Activated B cell treated with CpG ODN at 0.5 μM for 24 hours (primary cell): ENCODE measurements at regions of chr22 and their contacts with region 1.

Region 1: GRCh38 chr22:40323681-40324171 is 22.6 kb upstream of the ADSL start:
- DNase-seq: no peak
- ATAC-seq: no peak
- H3K4me3 Mint-ChIP-seq: no peak overlapping the region
- H3K27ac Mint-ChIP-seq: no peak overlapping the region
- H3K4me1 Mint-ChIP-seq: peaks cover 10% of the 10 kb centered on the region
- H3K27me3 Mint-ChIP-seq: no peaks in the 10 kb centered on the region
- CTCF ChIP-seq: no peak

Region 2: DNA sequence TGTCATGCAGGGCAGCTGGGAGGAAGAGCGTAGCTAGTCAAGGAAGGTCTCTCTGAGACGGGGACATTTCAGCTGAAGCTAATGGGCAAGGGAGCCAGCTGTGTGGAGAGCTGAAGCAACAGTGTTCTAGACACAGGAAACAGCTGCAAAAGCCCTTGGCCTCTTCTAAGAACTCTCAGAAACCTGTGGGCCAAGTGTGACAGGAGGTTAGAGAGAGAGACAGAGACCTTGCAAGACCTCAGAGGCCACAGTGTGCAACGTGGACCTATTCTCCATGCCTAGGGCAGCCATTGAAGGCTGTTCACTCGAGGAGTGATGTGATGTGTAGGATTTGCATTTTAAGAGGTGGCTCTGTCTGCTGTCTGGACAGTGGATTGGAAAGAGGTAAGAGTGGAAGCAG is 194.7 kb before region 1 on chr22:
- CTCF ChIA-PET with region 1: no interaction called
- POLR2A ChIA-PET with region 1: no interaction called
- intact Hi-C with region 1: no loop called
- DNase-seq: no peak
- ATAC-seq: peak; percentile 25
- H3K4me3 Mint-ChIP-seq: no peak overlapping the region
- H3K27ac Mint-ChIP-seq: peak overlapping the region; percentile 5
- H3K4me1 Mint-ChIP-seq: peaks cover 4% of the 10 kb centered on the region
- H3K27me3 Mint-ChIP-seq: no peaks in the 10 kb centered on the region
- CTCF ChIP-seq: no peak

Region 3: DNA sequence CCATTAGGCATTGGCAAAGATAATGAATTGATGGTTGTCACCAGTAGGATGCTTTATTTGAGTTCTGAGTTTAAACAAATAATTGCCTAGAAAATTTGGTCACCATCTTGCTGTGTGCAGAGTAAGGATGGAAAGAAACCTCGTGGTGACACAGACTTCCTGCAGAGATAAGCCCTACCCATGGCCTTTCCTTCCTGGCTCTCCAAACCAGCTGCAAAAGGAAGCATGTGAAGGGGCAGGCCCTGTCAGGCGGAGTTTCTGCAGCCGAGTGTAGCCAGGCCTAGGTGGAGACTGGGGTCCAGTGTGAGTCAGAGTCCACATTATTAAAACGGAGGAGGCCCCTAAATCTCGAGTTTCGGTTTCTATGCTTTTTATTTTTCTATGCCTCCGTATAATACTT is 60.5 kb before region 1 on chr22:
- CTCF ChIA-PET with region 1: no interaction called
- POLR2A ChIA-PET with region 1: no interaction called
- intact Hi-C with region 1: no loop called
- DNase-seq: no peak
- ATAC-seq: no peak
- H3K4me3 Mint-ChIP-seq: no peak overlapping the region
- H3K27ac Mint-ChIP-seq: no peak overlapping the region
- H3K4me1 Mint-ChIP-seq: peaks cover 13% of the 10 kb centered on the region
- H3K27me3 Mint-ChIP-seq: no peaks in the 10 kb centered on the region
- CTCF ChIP-seq: no peak

Region 4: GRCh38 chr22:40965936-40966725 is 642.4 kb after region 1 on chr22:
- CTCF ChIA-PET with region 1: no interaction called
- POLR2A ChIA-PET with region 1: interaction called, 12 read pairs
- intact Hi-C with region 1: no loop called
- DNase-seq: no peak
- ATAC-seq: no peak
- H3K4me3 Mint-ChIP-seq: no peak overlapping the region
- H3K27ac Mint-ChIP-seq: no peak overlapping the region
- H3K4me1 Mint-ChIP-seq: peaks cover 9% of the 10 kb centered on the region
- H3K27me3 Mint-ChIP-seq: no peaks in the 10 kb centered on the region
- CTCF ChIP-seq: no peak